Esophagus squamous epithelium (tissue), 5 donors: ENCODE measurements at regions of chr12 and their contacts with region 1.

Region 1: DNA sequence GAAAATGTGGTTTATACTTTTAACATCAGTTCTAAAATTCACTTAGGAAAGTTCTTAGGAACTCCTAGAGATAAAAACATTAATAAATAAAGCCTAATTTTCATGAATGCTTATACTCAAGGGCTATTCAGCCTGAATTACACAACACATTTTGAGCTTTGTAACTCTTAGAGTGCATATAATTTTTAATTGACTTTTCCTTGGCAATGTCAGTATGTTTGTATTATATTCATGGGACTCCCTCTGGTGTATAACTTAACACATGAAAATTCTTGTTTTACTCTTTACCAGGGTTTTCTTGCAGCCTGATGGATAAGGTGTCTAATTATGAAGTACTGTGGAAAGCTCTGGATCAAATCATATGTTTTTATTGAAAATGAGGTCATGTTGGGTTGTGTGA is 150.6 kb upstream of the HMGA2 start:
- DNase-seq: no peak
- H3K4me3 ChIP-seq: no peak overlapping the region
- H3K27ac ChIP-seq: no peak overlapping the region
- H3K4me1 ChIP-seq: no peaks in the 10 kb centered on the region
- H3K27me3 ChIP-seq: no peaks in the 10 kb centered on the region
- CTCF ChIP-seq: peak in 2 of 6 experiments; percentile 15 to 56
- POLR2A ChIP-seq: no peak

Region 2: GRCh38 chr12:65602610-65603295 is 71.0 kb before region 1 on chr12:
- intact Hi-C with region 1: loop called (anchors 10 kb)
- DNase-seq: peak; percentile 4
- H3K4me3 ChIP-seq: peak overlapping the region in 1 of 4 donors; percentile 37
- H3K27ac ChIP-seq: peak overlapping the region in 2 of 4 donors; percentile 1 to 33
- H3K4me1 ChIP-seq: peaks cover 0 to 30% (median 14%) of the 10 kb centered on the region in 3 donors
- H3K27me3 ChIP-seq: peaks cover 0 to 20% (median 0%) of the 10 kb centered on the region in 4 donors
- CTCF ChIP-seq: peak; percentile 22 to 78 (median 66)
- POLR2A ChIP-seq: no peak